Activated CD4-positive, alpha-beta T cell treated with anti-CD3 and anti-CD28 coated beads for 36 hours (primary cell): ENCODE measurements at regions of chr10 and their contacts with region 1.

Region 1: DNA sequence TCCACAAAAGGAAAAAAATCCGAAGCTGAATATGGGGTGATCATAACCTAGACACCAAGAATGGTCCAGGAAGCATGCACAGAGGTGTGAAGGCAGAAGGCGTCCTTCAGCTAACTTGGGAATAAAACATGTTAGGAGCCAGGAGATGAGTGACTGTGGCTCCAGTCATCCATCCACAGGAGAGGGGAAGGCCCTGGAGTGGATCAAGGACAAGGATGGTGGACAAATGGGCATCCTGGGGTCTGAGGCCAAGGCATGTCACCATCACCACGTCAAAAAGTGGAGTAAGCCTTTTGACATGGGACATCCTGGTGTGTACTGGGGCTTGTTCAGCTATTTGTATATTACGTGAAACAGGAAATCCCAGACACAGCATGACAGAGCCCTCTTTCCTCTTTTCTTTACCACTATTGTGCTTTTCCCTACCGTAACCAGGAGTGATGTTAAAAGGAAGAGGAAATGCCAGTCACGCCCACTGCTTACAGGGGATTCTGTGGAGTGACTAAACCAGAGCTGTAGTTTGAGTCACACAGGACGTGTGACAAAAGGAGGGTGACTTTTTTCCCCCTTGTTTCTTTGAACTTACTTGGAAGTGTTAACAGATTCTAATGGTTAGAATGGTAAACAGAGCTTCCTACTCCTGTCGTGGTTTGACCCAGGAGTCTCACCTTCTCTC is 15.4 kb downstream of the ACSL5 start:
- DNase-seq: peak; percentile 76
- ATAC-seq: peak; percentile 90
- H3K4me3 Mint-ChIP-seq: no peak overlapping the region
- H3K27ac Mint-ChIP-seq: peak overlapping the region; percentile 88
- H3K4me1 Mint-ChIP-seq: peaks cover 61% of the 10 kb centered on the region
- H3K27me3 Mint-ChIP-seq: no peaks in the 10 kb centered on the region

Region 2: GRCh38 chr10:112375721-112376395 is 13.4 kb before region 1 on chr10:
- CTCF ChIA-PET with region 1: interaction called, 18 read pairs
- POLR2A ChIA-PET with region 1: interaction called, 14 read pairs
- intact Hi-C with region 1: loop called (anchors 1 kb)
- DNase-seq: peak; percentile 51
- ATAC-seq: peak; percentile 64
- H3K4me3 Mint-ChIP-seq: peak overlapping the region; percentile 93
- H3K27ac Mint-ChIP-seq: peak overlapping the region; percentile 100
- H3K4me1 Mint-ChIP-seq: peaks cover 54% of the 10 kb centered on the region
- H3K27me3 Mint-ChIP-seq: no peaks in the 10 kb centered on the region

Region 3: DNA sequence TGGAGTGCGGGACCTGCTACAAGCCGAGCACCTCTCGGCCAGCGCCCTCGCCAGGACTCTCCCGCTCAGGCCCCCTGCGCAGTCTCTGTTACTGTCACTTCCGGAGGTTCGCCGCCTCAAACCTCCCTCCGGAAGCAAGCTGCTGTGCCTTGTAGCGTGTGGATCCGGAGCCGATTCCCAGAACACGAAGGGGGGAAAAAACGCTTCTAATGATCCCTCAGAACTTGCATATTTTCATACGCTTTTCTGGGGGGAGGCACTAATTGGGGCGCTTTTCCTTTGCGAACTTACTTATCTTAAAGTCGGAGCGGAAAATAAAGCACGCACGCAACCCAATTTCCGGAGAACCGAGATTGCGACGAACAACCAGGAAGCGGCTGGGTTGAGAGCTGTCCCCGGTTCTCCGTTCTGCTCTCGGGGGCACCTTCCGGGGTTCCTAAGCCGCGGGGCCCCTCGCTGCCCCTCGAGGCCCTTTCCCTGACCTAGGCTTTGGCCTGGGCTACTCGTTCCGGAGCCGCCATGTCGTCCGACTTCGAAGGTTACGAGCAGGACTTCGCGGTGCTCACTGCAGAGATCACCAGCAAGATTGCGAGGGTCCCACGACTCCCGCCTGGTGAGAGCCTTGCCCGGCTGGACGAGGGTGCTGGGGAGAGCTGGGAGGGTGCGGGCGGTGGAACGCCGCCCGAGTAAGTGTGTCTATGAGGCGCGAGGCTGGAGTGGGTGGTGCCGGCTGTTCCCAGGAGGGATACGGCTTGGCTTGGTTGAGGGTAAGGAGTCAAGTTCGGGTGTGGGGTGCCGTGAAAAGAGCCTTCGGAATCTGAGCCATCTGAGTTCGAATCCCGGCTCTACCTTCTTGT is 57.8 kb after region 1 on chr10 and contains the starts of genes VTI1A and ZDHHC6:
- CTCF ChIA-PET with region 1: no interaction called
- POLR2A ChIA-PET with region 1: no interaction called
- intact Hi-C with region 1: loop called in 1 of 2 experiments (anchors 2 kb)
- DNase-seq: peak; percentile 91
- ATAC-seq: peak; percentile 90
- H3K4me3 Mint-ChIP-seq: peak within 1 kb of the TSS; percentile 84
- H3K27ac Mint-ChIP-seq: peak within 1 kb of the TSS; percentile 96
- H3K4me1 Mint-ChIP-seq: peaks cover 52% of the 10 kb centered on the region
- H3K27me3 Mint-ChIP-seq: no peaks in the 10 kb centered on the region
- total RNA-seq, gene VTI1A: 27.1 to 33.4 TPM
- total RNA-seq, gene ZDHHC6: 42.1 to 61.3 TPM

Region 4: DNA sequence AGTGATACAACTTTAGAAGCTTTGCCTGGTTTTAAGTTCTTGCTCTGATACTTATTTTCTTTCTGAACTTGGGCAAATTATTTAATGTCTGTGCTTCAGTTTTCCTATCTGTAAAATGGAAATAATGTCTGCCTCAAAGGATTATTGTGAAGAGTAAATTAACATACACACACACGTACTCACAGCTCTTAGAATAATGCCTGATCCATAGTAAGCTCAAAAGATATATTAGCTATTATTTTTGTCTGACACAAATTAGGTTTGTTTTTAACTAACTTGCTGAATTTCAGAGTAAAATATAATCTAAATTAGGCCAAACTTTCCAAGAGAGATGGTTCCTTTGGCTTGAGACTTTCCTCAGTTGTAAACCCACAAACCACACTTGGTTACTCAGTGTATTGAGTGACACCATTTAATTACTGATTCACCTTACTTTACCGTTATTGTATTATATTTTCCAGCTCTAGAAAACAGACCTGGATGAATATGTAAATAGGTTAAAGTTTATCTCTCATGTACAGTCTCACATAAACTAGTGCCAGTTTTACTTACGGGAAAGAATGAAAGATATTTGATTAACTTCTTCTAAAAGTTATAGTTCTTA is 108.2 kb after region 1 on chr10:
- CTCF ChIA-PET with region 1: no interaction called
- POLR2A ChIA-PET with region 1: no interaction called
- intact Hi-C with region 1: no loop called
- DNase-seq: no peak
- ATAC-seq: no peak
- H3K4me3 Mint-ChIP-seq: no peak overlapping the region
- H3K27ac Mint-ChIP-seq: no peak overlapping the region
- H3K4me1 Mint-ChIP-seq: peaks cover 2% of the 10 kb centered on the region
- H3K27me3 Mint-ChIP-seq: no peaks in the 10 kb centered on the region

Region 5: GRCh38 chr10:112526139-112526538 is 136.9 kb after region 1 on chr10:
- CTCF ChIA-PET with region 1: no interaction called
- POLR2A ChIA-PET with region 1: interaction called, 3 read pairs
- intact Hi-C with region 1: loop called (anchors 2 to 5 kb)
- DNase-seq: peak; percentile 23
- ATAC-seq: peak; percentile 94
- H3K4me3 Mint-ChIP-seq: no peak overlapping the region
- H3K27ac Mint-ChIP-seq: no peak overlapping the region
- H3K4me1 Mint-ChIP-seq: peaks cover 35% of the 10 kb centered on the region
- H3K27me3 Mint-ChIP-seq: no peaks in the 10 kb centered on the region

Region 6: DNA sequence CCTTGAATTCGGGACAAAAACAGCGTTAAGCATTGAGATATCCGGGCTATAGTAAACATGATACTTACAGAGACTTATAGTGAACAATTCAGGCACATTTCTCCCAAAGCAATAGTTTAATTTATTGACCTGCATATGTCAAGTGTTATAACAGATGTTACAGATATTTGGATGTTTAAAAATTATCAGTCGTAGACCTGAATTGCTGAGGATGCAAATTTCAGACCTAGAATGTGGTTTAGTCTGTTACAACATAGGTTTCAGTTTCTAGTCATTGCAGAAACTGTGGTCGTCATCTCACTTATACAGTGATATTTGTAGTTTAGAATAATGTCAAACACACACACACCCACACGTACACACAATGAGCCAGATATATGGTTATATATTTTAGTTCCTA is 142.9 kb after region 1 on chr10:
- CTCF ChIA-PET with region 1: no interaction called
- POLR2A ChIA-PET with region 1: no interaction called
- intact Hi-C with region 1: loop called (anchors 2 to 5 kb)
- DNase-seq: peak; percentile 13
- ATAC-seq: peak; percentile 92
- H3K4me3 Mint-ChIP-seq: no peak overlapping the region
- H3K27ac Mint-ChIP-seq: no peak overlapping the region
- H3K4me1 Mint-ChIP-seq: peaks cover 32% of the 10 kb centered on the region
- H3K27me3 Mint-ChIP-seq: peaks cover 2% of the 10 kb centered on the region

Region 7: DNA sequence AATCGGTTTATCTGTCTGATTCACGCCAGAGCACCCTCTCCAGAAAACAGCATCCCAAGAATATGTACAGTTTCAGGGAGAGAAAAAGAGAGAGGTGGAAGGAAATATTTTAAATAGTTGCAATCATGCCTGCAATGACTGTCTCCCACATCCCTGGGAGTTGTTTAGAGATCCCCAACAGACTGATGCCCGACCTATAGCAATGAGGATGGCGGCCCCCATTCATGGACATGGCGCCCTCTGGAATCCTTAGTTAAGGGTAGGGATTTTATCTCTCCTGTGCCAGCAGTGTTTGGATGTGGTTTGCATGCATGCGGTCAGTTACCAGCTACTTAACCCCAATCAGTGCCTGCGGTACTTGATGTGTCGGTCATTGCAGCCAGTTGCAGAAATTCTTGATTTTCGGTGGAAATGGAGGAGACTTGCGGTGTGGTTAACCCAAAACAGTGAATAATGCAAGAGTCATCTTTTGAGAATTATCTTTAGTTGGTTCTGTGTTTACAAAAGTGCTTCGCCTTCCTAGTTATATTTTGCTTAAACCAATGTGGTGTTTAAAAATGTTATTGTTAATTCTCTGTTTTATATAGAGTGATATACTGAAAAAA is 374.7 kb after region 1 on chr10:
- CTCF ChIA-PET with region 1: no interaction called
- POLR2A ChIA-PET with region 1: no interaction called
- intact Hi-C with region 1: no loop called
- DNase-seq: no peak
- ATAC-seq: no peak
- H3K4me3 Mint-ChIP-seq: no peak overlapping the region
- H3K27ac Mint-ChIP-seq: no peak overlapping the region
- H3K4me1 Mint-ChIP-seq: no peaks in the 10 kb centered on the region
- H3K27me3 Mint-ChIP-seq: no peaks in the 10 kb centered on the region